Dendritic cell treated with granulocyte-macrophage colony-stimulating factor and Interleukin-4, amounts not matched to agents 40 ng/mL and 50 ng/mL, for 4 days (primary cell): ENCODE measurements at regions of chr16 and their contacts with region 1.

Region 1: DNA sequence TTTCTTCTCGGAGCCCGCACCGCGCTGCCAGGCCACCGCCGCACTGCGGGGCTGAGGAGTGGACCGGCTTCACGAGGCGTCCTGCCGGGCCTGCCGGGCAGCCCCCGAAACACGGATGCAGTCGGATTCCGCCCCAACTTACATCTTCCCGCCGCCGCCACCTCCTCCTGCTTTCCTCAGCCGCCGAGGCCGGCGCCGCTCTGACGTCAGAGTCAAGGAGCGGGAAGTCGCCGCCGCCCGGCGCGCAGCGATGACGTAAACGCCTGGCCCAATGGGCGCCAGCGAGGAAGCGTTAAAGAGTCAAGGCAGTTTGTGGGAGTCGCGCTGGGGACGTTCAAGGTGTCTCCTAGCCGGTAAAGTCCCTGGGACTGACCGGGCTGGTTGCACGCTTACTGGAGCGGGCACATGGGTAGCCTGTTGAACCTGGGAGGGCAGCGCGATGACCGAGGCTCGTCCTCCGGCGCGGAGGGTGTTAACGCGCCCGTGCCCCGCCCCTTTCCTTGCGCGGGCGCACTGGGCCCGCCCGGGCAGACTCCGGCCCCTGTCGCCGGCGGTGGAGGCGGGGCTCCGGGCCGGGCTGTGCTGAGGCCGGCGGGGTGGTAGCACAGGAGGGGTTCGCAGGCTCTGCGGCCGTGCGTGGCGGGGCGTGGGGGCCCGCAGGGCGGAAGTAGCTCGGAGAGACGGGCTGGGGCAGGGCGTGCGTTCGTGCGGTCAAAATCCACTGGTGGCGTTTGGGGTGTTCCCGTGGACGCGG is at the start of gene RNPS1:
- H3K4me3 Mint-ChIP-seq: peak within 1 kb of the TSS; percentile 97
- H3K27ac Mint-ChIP-seq: peak within 1 kb of the TSS; percentile 98
- H3K4me1 Mint-ChIP-seq: peaks cover 62% of the 10 kb centered on the region
- H3K27me3 Mint-ChIP-seq: no peaks in the 10 kb centered on the region

Region 2: GRCh38 chr16:2251483-2252240 is 16.4 kb before region 1 on chr16 and contains the start of gene ECI1:
- intact Hi-C with region 1: loop called (anchors 1 kb)
- H3K4me3 Mint-ChIP-seq: peak within 1 kb of the TSS; percentile 88
- H3K27ac Mint-ChIP-seq: peak within 1 kb of the TSS; percentile 85
- H3K4me1 Mint-ChIP-seq: peaks cover 12% of the 10 kb centered on the region
- H3K27me3 Mint-ChIP-seq: no peaks in the 10 kb centered on the region

Region 3: DNA sequence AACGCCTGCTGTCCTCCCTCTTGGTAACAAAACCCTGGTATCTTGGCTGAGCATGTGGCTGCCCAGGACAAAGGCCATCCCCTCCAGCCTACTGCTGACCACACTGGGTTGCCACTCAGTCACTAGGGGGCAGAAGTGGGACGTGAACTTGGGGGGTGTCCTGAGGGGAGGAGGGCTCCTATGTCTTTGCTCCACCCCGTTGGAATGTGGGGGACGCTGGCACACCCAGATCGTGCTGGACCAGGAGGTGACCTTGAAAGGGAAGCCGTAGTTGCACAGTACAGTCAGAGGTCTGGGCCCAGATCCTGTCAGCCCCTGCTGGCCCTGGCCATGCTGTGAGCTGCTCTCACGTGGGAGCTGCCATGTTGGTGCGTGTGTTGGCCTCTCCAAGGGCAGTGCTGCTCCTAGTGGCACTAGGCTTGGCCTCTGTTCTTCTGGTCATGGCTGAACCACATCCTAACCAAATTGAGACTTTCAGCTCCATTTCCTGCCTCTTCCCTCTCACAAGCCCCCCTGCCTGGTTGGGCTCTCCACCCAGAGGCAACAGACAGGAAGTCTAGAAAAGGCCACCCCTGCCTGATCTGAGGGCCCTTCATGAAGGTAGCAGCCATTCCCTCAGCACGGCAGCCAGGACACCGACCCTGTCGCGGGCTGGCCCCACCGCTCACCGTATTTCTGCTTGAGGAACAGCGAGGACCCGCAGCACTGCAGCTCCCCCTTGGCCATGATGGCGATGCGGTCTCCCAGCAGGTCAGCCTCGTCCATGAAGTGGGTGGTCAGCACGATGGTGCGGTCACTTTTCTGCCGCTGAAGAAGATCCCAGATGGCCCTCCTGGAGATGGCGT is 28.8 kb after region 1 on chr16:
- intact Hi-C with region 1: no loop called
- H3K4me3 Mint-ChIP-seq: no peak overlapping the region
- H3K27ac Mint-ChIP-seq: no peak overlapping the region
- H3K4me1 Mint-ChIP-seq: peaks cover 16% of the 10 kb centered on the region
- H3K27me3 Mint-ChIP-seq: no peaks in the 10 kb centered on the region